ENCODE measurements at regions of chr9 and their contacts with region 1.

Region 1: GRCh38 chr9:97327562-97327961 is 20.1 kb downstream of the CCDC180 start:
- DNase-seq: no peak
- ATAC-seq: no peak
- H3K4me3 ChIP-seq: no peak overlapping the region
- H3K27ac ChIP-seq: no peak overlapping the region
- H3K4me1 ChIP-seq: no peaks in the 10 kb centered on the region
- H3K27me3 ChIP-seq: no peaks in the 10 kb centered on the region
- CTCF ChIP-seq: no peak

Region 2: DNA sequence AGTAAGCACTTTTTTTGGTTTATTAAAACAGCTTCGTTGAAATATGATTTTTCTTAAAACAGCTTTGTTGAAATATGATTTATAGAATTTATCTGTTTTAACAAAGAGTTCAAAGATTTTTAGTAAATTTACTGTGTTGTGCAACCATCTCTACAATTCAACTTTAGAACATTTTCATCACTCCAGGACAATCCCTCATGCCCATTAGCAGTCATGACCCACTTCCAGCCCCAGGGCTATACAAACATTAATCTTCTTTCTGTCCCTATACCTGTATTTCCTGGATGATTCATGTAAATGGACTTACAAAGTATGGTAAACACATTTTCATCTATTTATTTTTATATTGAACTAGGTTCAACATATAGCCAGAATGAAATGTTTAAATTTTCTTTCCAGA is 148.0 kb before region 1 on chr9:
- CTCF ChIA-PET with region 1: no interaction called
- POLR2A ChIA-PET with region 1: no interaction called
- in situ Hi-C with region 1: no loop called
- intact Hi-C with region 1: no loop called
- DNase-seq: no peak
- ATAC-seq: no peak
- H3K4me3 ChIP-seq: no peak overlapping the region
- H3K27ac ChIP-seq: no peak overlapping the region
- H3K4me1 ChIP-seq: no peaks in the 10 kb centered on the region
- H3K27me3 ChIP-seq: no peaks in the 10 kb centered on the region
- CTCF ChIP-seq: no peak

Region 3: GRCh38 chr9:97293207-97293721 is 34.3 kb before region 1 on chr9:
- CTCF ChIA-PET with region 1: no interaction called
- POLR2A ChIA-PET with region 1: no interaction called
- in situ Hi-C with region 1: no loop called
- intact Hi-C with region 1: no loop called
- DNase-seq: no peak
- ATAC-seq: no peak
- H3K4me3 ChIP-seq: no peak overlapping the region
- H3K27ac ChIP-seq: no peak overlapping the region
- H3K4me1 ChIP-seq: no peaks in the 10 kb centered on the region
- H3K27me3 ChIP-seq: no peaks in the 10 kb centered on the region
- CTCF ChIP-seq: no peak

Region 4: GRCh38 chr9:97501177-97501971 is 173.8 kb after region 1 on chr9 and contains the start of gene TMOD1:
- CTCF ChIA-PET with region 1: no interaction called
- POLR2A ChIA-PET with region 1: interaction called, 12 read pairs
- in situ Hi-C with region 1: no loop called
- intact Hi-C with region 1: no loop called
- DNase-seq: no peak
- ATAC-seq: peak; percentile 93
- H3K4me3 ChIP-seq: peak within 1 kb of the TSS; percentile 46 to 57
- H3K27ac ChIP-seq: no peak within 1 kb of the TSS
- H3K4me1 ChIP-seq: no peaks in the 10 kb centered on the region
- H3K27me3 ChIP-seq: peaks cover 5% of the 10 kb centered on the region
- CTCF ChIP-seq: peak; percentile 70
- total RNA-seq, gene TMOD1: 1.4 TPM

Measured in Panc1 (cell line).